AG04449 (cell line): ENCODE measurements at regions of chr7 and their contacts with region 1.

Region 1: DNA sequence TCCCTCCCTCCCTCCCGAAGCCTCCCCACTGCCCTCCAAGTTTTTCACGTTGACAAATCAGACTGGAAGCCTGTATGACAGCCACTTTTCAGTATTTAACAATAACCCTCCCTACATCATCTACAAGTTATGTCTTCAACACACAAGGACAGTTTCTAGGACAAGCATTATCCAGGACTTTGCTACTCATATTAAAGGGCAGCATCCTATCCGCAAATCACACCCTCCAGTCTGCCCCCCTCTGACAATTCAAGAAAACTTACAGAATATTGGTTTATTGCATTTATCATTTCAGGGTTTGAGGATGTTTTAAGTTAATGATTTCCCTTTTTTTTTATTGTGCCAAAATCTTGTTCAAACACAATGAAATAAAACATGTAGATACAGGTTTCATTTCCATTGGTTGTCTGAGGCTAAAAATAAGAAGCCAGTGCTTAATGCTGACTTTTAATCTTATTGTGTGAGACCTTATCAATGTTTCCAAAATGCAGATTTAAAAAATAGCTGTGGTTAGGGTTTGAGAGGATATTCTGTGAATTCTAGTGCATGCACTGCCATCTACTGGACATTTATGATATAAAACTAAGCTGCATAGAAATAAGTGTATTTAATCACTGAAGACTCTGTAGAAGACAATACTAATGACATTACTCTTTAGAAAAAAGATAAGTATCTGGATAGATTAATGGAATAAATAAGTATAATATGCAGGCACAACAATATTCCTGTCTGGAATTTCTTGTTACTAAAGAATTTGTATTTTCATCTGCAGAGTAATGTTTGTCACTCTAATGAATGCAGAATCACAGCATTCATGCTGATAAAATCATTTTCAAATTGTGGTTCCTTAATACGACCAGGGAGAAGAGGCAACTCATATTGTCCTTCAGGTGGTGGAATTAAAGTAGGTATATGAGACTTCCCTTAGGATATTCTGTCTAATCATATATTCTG is 64.1 kb downstream of the CAV1 start:
- DNase-seq: no peak
- H3K4me3 ChIP-seq: no peak overlapping the region
- CTCF ChIP-seq: peak; percentile 16

Region 2: GRCh38 chr7:116138202-116138801 is 450.6 kb before region 1 on chr7:
- CTCF ChIA-PET with region 1: interaction called, 13 read pairs
- POLR2A ChIA-PET with region 1: no interaction called
- DNase-seq: peak; percentile 23
- H3K4me3 ChIP-seq: no peak overlapping the region
- CTCF ChIP-seq: peak; percentile 64

Region 3: GRCh38 chr7:116236020-116236630 is 352.8 kb before region 1 on chr7:
- CTCF ChIA-PET with region 1: interaction called, 76 read pairs
- POLR2A ChIA-PET with region 1: no interaction called
- DNase-seq: no peak
- H3K4me3 ChIP-seq: no peak overlapping the region
- CTCF ChIP-seq: peak; percentile 8

Region 4: GRCh38 chr7:116284390-116284789 is 304.5 kb before region 1 on chr7:
- CTCF ChIA-PET with region 1: no interaction called
- POLR2A ChIA-PET with region 1: no interaction called
- DNase-seq: no peak
- H3K4me3 ChIP-seq: no peak overlapping the region
- CTCF ChIP-seq: no peak

Region 5: GRCh38 chr7:116443101-116443523 is 145.8 kb before region 1 on chr7:
- CTCF ChIA-PET with region 1: interaction called, 12 read pairs
- POLR2A ChIA-PET with region 1: no interaction called
- DNase-seq: peak; percentile 76
- H3K4me3 ChIP-seq: no peak overlapping the region
- CTCF ChIP-seq: no peak

Region 6: GRCh38 chr7:116576350-116577319 is 12.3 kb before region 1 on chr7:
- CTCF ChIA-PET with region 1: interaction called, 20 read pairs
- POLR2A ChIA-PET with region 1: interaction called, 5 read pairs
- DNase-seq: peak; percentile 86
- H3K4me3 ChIP-seq: no peak overlapping the region
- CTCF ChIP-seq: no peak

Region 7: GRCh38 chr7:116671681-116672595 is 83.0 kb after region 1 on chr7 and contains the start of gene MET:
- CTCF ChIA-PET with region 1: interaction called, 12 read pairs
- POLR2A ChIA-PET with region 1: interaction called, 4 read pairs
- DNase-seq: no peak
- H3K4me3 ChIP-seq: peak within 1 kb of the TSS; percentile 89
- CTCF ChIP-seq: peak; percentile 83

Region 8: DNA sequence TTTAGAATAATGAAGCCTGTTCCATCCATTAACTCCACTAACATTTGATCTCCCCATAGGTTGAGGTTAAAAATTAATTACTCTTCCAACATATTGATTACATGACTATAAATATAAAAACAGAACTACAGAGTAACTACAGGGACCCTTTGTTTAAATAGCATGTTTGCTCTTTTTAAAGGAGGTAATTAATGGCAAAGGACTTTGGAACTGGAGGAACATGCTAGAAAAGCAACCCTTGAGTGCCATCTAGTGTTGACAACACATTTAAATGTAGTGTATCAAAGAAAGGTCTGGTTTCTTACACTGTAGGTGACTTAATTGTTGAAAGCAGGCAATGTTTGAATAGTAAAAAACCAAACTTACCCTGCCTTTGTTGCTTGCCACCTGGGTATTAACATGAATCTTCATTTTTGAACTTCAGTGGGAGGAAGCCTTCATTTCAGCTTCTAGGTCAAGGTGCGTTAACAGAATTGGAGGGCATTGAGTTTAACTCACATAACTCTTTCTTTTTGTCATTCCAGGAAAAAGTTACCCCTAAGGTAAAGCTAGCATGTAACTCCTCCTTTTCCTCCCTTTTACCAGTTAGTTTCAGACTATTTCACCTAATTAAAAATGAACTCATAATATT is 220.8 kb after region 1 on chr7:
- CTCF ChIA-PET with region 1: interaction called, 353 read pairs
- POLR2A ChIA-PET with region 1: no interaction called
- DNase-seq: no peak
- H3K4me3 ChIP-seq: no peak overlapping the region
- CTCF ChIP-seq: peak; percentile 36